ENCODE measurements at regions of chr21 and their contacts with region 1.

Region 1: DNA sequence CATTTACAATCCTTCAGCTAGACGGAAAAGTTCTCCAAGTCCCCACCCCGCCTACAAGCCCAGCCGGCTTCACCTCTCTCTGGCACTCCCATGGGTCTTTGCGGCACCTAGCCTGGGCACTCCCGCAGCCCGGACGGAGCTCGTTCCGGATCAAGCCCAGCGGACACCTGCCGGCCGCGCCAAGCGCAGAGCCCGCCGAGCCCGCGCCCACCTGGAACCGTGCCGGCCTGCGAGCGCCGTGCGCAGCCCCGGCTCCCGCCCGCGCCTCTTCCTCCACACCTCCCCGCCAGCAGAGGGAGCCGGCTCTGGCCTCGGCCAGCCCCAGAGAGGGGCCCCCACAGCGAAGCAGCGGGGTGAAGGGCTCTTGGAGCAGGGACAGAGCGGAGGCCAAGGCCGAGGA is 50.0 kb upstream of the KRTAP19-8 start:
- DNase-seq: no peak
- ATAC-seq: no peak

Region 2: DNA sequence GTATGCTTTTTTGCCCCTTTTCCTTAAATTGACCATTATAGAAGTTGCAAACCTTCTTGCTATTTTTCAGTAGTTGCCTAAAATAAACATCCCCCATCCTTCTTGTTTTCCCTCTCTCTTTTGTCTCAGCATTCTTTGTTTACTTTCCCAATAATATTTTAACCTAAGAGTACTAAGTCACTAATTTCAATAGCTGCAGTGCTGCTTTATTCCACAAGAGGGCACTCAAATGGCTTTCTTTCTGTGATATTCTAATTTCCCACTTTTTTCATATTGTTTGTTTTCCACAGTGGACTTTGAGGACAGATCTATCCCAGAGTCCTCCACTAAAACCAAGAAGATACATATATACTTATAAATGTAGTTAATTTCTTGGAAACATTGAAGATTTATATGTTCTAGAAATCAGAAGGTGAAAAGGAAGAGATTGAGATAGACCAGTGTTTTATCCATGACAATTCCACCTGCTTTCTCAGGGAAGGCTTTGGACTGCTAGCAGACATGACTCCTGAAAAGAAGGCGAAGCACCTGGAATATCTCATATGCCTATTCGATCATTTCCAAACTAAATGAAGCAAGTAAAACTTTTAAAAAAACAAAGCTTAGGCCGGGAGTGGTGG is 1043.8 kb before region 1 on chr21:
- intact Hi-C with region 1: loop called (anchors 10 kb)
- DNase-seq: no peak
- ATAC-seq: no peak

Region 3: GRCh38 chr21:30340441-30341241 is 747.7 kb before region 1 on chr21:
- intact Hi-C with region 1: loop called (anchors 5 kb)
- DNase-seq: no peak
- ATAC-seq: no peak

Region 4: GRCh38 chr21:30444204-30444603 is 644.1 kb before region 1 on chr21:
- intact Hi-C with region 1: loop called (anchors 10 kb)
- DNase-seq: no peak
- ATAC-seq: no peak

Region 5: GRCh38 chr21:30831194-30831765 is 257.0 kb before region 1 on chr21:
- intact Hi-C with region 1: loop called (anchors 5 kb)
- DNase-seq: no peak
- ATAC-seq: no peak

Region 6: GRCh38 chr21:31041295-31042079 is 46.8 kb before region 1 on chr21:
- intact Hi-C with region 1: no loop called
- DNase-seq: no peak
- ATAC-seq: no peak

Region 7: DNA sequence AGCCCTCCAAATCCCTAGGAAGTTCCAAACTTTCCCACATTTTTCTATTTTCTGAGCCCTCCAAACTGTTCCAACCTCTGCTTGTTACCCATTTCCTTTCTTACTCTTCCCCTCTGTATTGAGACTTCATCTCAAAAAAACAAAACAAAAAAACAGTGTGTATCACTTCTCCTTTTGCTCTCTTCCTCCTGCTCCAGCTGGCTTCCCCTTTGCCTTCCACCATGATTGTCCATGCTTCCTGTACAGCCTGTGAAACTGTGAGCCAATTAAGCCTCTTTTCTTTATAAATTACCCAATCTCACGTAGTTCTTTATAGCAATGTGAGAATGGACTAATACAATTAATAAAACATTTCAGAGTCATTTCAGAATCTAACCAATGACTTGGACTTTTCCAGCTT is 19.6 kb after region 1 on chr21:
- intact Hi-C with region 1: no loop called
- DNase-seq: no peak
- ATAC-seq: no peak

Region 8: GRCh38 chr21:31498981-31499380 is 410.7 kb after region 1 on chr21:
- intact Hi-C with region 1: no loop called
- DNase-seq: no peak
- ATAC-seq: no peak